Dorsolateral prefrontal cortex (tissue), 120 donors: ENCODE measurements at regions of chr1 and their contacts with region 1.

Region 1: DNA sequence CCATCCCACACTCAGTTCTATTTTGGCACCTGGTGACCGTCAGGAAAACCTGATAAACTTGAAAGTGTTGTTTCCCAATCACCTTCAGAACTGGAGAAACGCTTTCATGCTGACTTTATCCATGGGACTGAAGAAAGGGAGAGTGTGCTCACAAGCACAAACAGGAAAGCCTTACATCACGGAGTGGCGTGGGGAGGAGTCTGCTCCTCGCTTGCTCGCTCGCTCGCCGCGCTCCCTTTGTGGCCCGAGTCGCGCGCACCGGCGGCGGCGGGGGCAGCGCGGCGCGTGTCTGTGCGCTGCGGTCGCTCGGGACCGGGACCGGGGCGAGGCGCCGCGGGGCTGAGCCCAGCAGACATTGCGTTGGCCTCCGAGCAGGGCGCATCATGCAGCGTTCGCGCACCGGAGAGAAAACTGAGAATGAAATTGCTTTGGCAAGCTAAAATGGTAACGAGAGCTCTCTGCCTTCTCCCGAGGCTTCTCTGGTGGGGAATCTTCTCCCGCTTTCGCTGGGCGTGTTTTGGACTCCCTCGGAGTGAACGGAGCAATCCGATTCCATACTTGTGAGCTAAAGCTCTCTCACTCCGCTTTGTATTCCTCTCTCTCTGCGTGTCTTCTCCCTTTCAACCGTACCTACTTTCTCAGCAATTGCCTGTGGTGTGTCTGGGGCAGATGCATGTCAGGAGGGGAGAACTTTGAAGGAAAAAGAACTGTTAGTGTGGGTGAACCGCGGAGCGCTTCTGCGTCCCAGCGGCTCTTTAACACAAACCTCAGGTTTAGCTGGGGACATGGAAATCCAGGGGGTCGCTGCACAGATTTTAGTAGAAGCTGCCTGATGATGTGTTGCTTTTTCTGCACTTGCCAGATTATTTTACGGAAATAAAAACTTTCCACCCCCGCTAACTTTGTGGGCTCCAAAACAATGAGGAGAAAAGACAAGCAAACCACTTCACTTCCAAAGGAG is at the start of gene RGL1:
- DNase-seq: peak; percentile 53 to 85 (median 70)
- H3K4me3 ChIP-seq: peak within 1 kb of the TSS; percentile 52 to 89 (median 76)
- H3K27ac ChIP-seq: peak within 1 kb of the TSS; percentile 37 to 96 (median 90)
- H3K27me3 ChIP-seq: no peaks in the 10 kb centered on the region
- CTCF ChIP-seq: peak in 13 of 56 donors; percentile 6 to 47 (median 14)
- total RNA-seq, gene RGL1: 50.4 to 101 (median 62.6) TPM

Region 2: GRCh38 chr1:183635606-183636333 is 169.4 kb before region 1 on chr1 and contains the start of gene ARPC5:
- intact Hi-C with region 1: loop called in 1 of 2 experiments (anchors 5 kb)
- DNase-seq: peak; percentile 94 to 99 (median 97)
- H3K4me3 ChIP-seq: peak within 1 kb of the TSS; percentile 70 to 99 (median 88)
- H3K27ac ChIP-seq: peak within 1 kb of the TSS; percentile 69 to 99 (median 94)
- H3K27me3 ChIP-seq: no peaks in the 10 kb centered on the region
- CTCF ChIP-seq: peak in 35 of 56 donors; percentile 4 to 60 (median 24)
- total RNA-seq, gene ARPC5: 31.6 to 78.5 (median 50.0) TPM

Region 3: GRCh38 chr1:183655562-183656075 is 149.5 kb before region 1 on chr1:
- intact Hi-C with region 1: loop called in 1 of 2 experiments (anchors 10 kb)
- DNase-seq: peak; percentile 76 to 91 (median 82)
- H3K4me3 ChIP-seq: peak overlapping the region in 3 of 59 donors; percentile 9 to 13 (median 12)
- H3K27ac ChIP-seq: peak overlapping the region in 39 of 59 donors; percentile 3 to 78 (median 51)
- H3K27me3 ChIP-seq: no peaks in the 10 kb centered on the region
- CTCF ChIP-seq: peak; percentile 83 to 99 (median 96)

Region 4: GRCh38 chr1:183685112-183685713 is 119.9 kb before region 1 on chr1:
- intact Hi-C with region 1: loop called in 1 of 2 experiments (anchors 10 kb)
- DNase-seq: no peak
- H3K4me3 ChIP-seq: no peak overlapping the region
- H3K27ac ChIP-seq: no peak overlapping the region
- H3K27me3 ChIP-seq: no peaks in the 10 kb centered on the region
- CTCF ChIP-seq: peak; percentile 46 to 86 (median 71)

Region 5: GRCh38 chr1:183871142-183871541 is 66.0 kb after region 1 on chr1:
- intact Hi-C with region 1: loop called (anchors 2 to 5 kb)
- DNase-seq: peak in 1 of 10 donors; percentile 37
- H3K4me3 ChIP-seq: peak overlapping the region in 18 of 59 donors; percentile 1 to 42 (median 20)
- H3K27ac ChIP-seq: peak overlapping the region; percentile 65 to 98 (median 94)
- H3K27me3 ChIP-seq: no peaks in the 10 kb centered on the region
- CTCF ChIP-seq: no peak

Region 6: GRCh38 chr1:183915625-183916510 is 110.7 kb after region 1 on chr1:
- intact Hi-C with region 1: loop called (anchors 2 to 5 kb)
- DNase-seq: peak in 8 of 10 donors; percentile 65 to 82 (median 72)
- H3K4me3 ChIP-seq: peak overlapping the region in 17 of 59 donors; percentile 4 to 44 (median 21)
- H3K27ac ChIP-seq: peak overlapping the region; percentile 20 to 100 (median 96)
- H3K27me3 ChIP-seq: no peaks in the 10 kb centered on the region
- CTCF ChIP-seq: peak; percentile 88 to 100 (median 95)